ENCODE measurements at regions of chr18 and their contacts with region 1.

Region 1: GRCh38 chr18:45722899-45723298 is 1.1 kb upstream of the SLC14A1 start:
- H3K4me3 Mint-ChIP-seq: no peak overlapping the region
- H3K27ac Mint-ChIP-seq: no peak overlapping the region
- H3K4me1 Mint-ChIP-seq: no peaks in the 10 kb centered on the region
- H3K27me3 Mint-ChIP-seq: peaks cover 1% of the 10 kb centered on the region

Region 2: GRCh38 chr18:45879681-45880655 is 157.1 kb after region 1 on chr18:
- intact Hi-C with region 1: loop called (anchors 1 kb)
- H3K4me3 Mint-ChIP-seq: no peak overlapping the region
- H3K27ac Mint-ChIP-seq: no peak overlapping the region
- H3K4me1 Mint-ChIP-seq: peaks cover 7% of the 10 kb centered on the region
- H3K27me3 Mint-ChIP-seq: no peaks in the 10 kb centered on the region